ENCODE measurements at regions of chr19 and their contacts with region 1.

Region 1: DNA sequence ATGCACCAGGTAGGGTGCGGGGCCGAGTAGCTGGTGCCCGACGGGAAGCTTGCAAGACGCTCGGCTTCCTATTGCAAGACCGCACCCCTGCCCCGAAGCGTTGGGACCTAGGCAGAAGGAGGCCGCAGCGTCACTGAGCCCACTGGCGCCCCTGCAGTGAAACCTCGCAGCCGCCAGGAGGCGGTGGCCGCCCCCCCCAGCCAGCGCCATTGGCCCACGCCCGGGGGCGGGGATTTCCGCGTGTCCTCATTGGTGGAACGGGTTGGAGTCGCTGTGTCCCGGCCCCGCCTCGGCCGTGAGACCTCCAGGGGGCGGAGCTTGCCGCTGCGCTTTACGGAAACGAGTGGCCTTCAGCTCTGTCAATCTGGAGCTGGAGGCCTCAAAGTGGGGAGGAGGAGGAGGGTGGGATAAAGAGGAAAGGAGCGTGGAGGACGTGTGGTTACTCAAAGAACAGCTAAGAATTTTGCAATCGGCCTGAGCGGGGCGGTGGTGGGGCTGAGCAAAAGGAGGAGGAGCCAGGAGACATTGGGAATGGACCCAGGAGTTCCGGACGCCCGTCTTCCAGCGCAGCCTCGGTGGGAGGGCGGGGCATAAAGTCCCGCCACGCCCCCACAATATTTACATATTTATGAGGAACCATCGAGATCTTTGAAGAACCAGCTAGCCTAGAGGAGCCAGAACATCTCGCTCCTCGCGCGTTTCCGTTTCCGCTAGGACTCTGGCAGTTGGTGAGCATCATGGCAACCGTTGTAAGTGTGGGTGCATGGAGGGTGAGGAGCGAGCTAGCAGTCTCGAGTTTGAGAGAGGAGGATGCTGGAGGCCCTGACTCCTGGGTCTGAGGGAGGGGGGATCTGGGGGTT is at the starts of genes GYS1 and RUVBL2:
- DNase-seq: peak; percentile 99
- ATAC-seq: peak; percentile 90
- H3K4me3 ChIP-seq: peak within 1 kb of the TSS; percentile 90 to 98 (median 98)
- H3K27ac ChIP-seq: peak within 1 kb of the TSS; percentile 80
- H3K4me1 ChIP-seq: peaks cover 41% of the 10 kb centered on the region
- H3K27me3 ChIP-seq: no peaks in the 10 kb centered on the region; a peak in 1 of 5 replicates
- CTCF ChIP-seq: peak; percentile 93
- EP300 ChIP-seq: no peak
- POLR2A ChIP-seq: peak; percentile 91 to 98
- RAD21 ChIP-seq: peak; percentile 50; the same call in 1 of the 2 replicates
- total RNA-seq, gene GYS1: 16.4 and 18.4 TPM in 2 replicates
- total RNA-seq, gene RUVBL2: 108 and 122 TPM in 2 replicates

Region 2: GRCh38 chr19:48872182-48872883 is 121.1 kb before region 1 on chr19 and contains the start of gene PPP1R15A:
- CTCF ChIA-PET with region 1: no interaction called
- POLR2A ChIA-PET with region 1: interaction called, 24 read pairs
- in situ Hi-C with region 1: no loop called
- intact Hi-C with region 1: no loop called
- DNase-seq: peak; percentile 95
- ATAC-seq: peak; percentile 50
- H3K4me3 ChIP-seq: peak within 1 kb of the TSS; percentile 93 to 97 (median 94)
- H3K27ac ChIP-seq: peak within 1 kb of the TSS; percentile 99
- H3K4me1 ChIP-seq: peaks cover 50% of the 10 kb centered on the region
- H3K27me3 ChIP-seq: no peaks in the 10 kb centered on the region; a peak in 1 of 5 replicates
- CTCF ChIP-seq: 0 out of 2 replicates have a peak, but pooled peaks have one; percentile 3
- EP300 ChIP-seq: no peak; a peak in 1 of 4 replicates
- POLR2A ChIP-seq: peak; percentile 99
- RAD21 ChIP-seq: no peak
- total RNA-seq, gene PPP1R15A: 7.8 and 18.5 TPM in 2 replicates

Region 3: GRCh38 chr19:48970923-48971395 is 22.4 kb before region 1 on chr19:
- CTCF ChIA-PET with region 1: no interaction called
- POLR2A ChIA-PET with region 1: interaction called, 57 read pairs
- in situ Hi-C with region 1: no loop called
- intact Hi-C with region 1: no loop called
- DNase-seq: peak; percentile 57
- ATAC-seq: peak; percentile 16
- H3K4me3 ChIP-seq: no peak overlapping the region
- H3K27ac ChIP-seq: no peak overlapping the region
- H3K4me1 ChIP-seq: peaks cover 17% of the 10 kb centered on the region
- H3K27me3 ChIP-seq: no peaks in the 10 kb centered on the region; a peak in 1 of 5 replicates
- CTCF ChIP-seq: peak; percentile 95
- EP300 ChIP-seq: no peak
- POLR2A ChIP-seq: no peak
- RAD21 ChIP-seq: peak; percentile 90

Region 4: DNA sequence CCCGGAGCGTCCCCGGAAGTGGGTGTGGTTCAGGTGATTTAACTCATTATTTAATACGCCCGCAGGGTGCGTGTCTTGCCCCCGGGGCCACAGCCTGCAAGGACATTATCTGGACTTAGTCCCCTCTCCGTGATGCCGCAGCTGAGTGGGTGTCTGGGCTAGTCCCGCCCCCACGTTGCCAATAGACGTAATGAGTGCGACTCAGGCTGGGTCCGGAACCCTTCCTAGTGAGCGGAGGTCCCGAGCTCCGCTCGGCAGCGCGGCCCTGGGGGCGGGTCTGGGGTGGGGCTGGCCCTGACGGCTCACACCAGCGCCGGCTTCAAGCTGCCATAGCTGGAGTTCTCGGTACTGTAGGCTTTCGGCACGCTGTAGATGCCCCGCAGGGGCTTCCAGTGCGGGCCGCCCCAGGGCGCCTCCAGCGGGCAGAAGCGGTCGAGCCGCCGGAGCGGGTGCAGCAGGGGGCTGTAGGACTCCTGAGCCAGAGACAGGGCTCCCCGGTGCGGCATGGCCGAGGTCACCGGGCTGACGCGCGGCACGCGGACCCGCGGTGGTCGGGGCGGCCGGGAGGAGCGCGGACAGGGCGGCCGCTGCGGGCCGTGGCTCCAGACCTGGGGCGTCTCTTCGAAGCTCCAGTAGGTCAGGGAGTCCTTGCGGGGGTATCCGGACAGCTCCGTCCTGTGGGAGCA is 24.4 kb after region 1 on chr19:
- CTCF ChIA-PET with region 1: no interaction called
- POLR2A ChIA-PET with region 1: interaction called, 21 read pairs
- in situ Hi-C with region 1: no loop called
- intact Hi-C with region 1: no loop called
- DNase-seq: peak; percentile 41
- ATAC-seq: peak; percentile 82
- H3K4me3 ChIP-seq: peak overlapping the region in 2 of 3 experiments; percentile 10 to 63; a peak in 3 of 6 replicates
- H3K27ac ChIP-seq: no peak overlapping the region
- H3K4me1 ChIP-seq: peaks cover 27% of the 10 kb centered on the region
- H3K27me3 ChIP-seq: peaks cover 0 to 25% of the 10 kb centered on the region in 2 experiments; a peak in 3 of 5 replicates
- CTCF ChIP-seq: peak; percentile 57
- EP300 ChIP-seq: no peak
- POLR2A ChIP-seq: no peak
- RAD21 ChIP-seq: peak; percentile 56

Measured in HepG2 (cell line).